Activated CD4-positive, alpha-beta T cell treated with anti-CD3 and anti-CD28 coated beads, Interleukin-2, amount 10 ng/mL, durations not matched to agents 24 days and 14 days (primary cell): ENCODE measurements at regions of chr13 and their contacts with region 1.

Region 1: DNA sequence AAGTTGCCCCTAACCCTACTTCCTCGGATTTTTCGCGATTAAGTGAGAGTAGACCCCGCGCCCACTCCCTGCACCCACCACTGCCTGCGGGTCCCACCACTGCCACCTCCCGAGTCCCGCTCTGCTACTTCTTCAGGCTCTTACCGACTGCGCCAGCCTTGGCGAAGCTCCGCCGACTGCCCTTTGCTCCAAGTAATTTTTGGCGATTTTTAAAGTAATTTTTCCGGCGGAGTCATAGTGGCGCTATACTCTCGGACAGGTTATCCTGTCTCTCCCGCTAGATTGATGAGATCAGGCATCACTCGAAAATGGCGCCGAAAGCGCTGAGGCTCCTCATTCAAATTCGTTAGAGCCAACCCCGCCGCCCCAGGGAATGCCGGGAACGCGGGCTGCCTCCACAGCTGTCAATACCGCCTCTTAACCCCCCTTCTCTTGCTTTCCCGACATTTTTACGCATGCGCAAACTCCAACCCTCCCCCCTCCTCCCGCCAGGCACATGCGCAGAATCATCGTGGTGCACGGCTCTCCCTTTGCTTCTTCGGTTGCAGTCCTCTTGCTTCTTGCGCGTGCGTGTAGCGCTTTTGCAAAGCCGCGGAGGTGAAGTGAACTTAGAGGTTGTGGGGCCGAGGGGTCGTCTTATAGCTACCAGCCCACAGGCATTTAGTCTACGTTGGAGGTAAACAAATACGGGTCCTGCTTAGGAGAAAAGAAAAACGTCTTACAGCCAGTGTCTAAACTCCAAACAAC is 66.6 kb downstream of the KCNRG start:
- DNase-seq: peak; percentile 99
- H3K4me3 Mint-ChIP-seq: peak overlapping the region; percentile 100
- H3K27ac Mint-ChIP-seq: peak overlapping the region; percentile 100
- H3K4me1 Mint-ChIP-seq: peaks cover 45% of the 10 kb centered on the region
- H3K27me3 Mint-ChIP-seq: peaks cover 5% of the 10 kb centered on the region

Region 2: DNA sequence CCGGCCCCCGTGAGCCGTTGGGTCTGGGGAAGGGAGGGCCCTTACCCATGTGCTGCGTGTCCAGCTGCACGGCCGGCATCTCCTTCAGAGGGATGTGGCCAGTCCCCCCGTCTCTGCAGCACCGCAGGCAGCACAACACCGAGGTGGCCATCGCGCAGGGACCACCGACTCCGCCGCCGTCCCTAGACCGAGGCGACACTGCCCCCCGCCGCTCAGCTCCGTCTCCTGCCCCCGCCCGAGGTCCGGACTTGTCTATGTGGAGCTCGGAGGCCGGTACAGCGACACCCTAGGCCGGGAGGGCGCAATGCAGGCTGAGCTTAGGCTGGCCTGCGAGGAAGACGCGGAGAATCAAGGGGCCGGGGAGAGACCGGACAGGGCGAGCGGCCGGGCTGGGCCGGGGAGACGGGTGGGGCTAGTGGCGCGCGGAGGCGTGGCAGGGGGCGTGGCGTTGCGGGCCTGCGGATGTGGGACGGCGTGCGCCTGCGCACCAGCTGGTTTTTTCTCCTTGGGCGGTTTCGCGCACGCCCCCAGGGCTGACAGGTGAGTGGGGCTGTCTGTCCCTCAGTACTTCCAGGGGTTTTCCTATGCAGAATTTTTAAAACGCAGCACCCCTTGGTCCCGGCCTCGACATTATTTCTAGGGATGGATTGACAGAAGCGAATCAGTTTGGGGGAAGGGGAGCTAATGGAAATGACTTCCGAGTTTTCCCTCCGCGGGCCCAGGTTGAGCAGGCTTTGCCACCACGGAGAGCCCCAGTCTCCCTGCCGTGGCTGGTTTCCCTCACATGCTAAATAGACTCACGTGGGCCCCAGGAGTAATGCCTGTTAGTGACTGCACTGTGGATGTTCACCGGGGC is 145.5 kb before region 1 on chr13 and contains the start of gene SPRYD7:
- intact Hi-C with region 1: loop called (anchors 5 kb)
- DNase-seq: peak; percentile 99
- H3K4me3 Mint-ChIP-seq: peak within 1 kb of the TSS; percentile 94
- H3K27ac Mint-ChIP-seq: peak within 1 kb of the TSS; percentile 83
- H3K4me1 Mint-ChIP-seq: peaks cover 13% of the 10 kb centered on the region
- H3K27me3 Mint-ChIP-seq: peaks cover 17% of the 10 kb centered on the region
- total RNA-seq, gene SPRYD7: 6.9 and 8.1 TPM in 2 replicates

Region 3: DNA sequence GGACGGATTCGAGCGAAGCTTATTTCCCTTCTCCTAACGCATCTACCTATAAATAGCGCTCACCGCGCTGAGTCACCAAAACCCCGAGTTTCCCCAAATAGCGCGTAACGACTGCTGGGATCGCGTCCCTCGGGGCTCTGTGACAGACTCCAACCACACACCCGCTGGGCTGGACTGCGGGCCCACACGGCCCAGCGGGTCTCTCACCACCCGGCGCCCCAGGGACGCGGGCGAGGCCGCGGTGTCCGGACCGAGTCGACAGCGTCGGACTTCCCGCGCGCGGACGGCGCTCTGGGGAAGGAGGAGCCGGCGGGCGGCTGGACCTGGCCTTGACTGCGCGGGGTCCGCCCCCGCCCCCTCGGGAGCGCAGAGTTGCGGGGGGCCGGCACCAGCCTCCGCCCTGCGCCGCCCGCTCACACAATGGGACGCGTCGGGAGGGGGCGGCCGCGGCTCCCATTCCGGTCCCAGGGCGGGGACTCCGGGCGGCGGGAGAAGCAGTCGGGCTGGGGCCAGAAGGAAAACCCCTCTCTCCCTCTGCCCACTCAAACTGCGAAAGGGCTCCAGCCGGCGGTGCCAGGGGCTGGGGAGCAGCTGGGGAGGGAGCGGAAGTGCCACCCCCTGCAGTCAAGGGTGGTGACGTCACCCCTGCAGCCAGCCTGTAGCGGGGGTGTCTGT is 42.1 kb after region 1 on chr13:
- intact Hi-C with region 1: loop called (anchors 1 kb)
- DNase-seq: peak; percentile 89
- H3K4me3 Mint-ChIP-seq: peak overlapping the region; percentile 84
- H3K27ac Mint-ChIP-seq: peak overlapping the region; percentile 93
- H3K4me1 Mint-ChIP-seq: peaks cover 41% of the 10 kb centered on the region
- H3K27me3 Mint-ChIP-seq: peaks cover 3% of the 10 kb centered on the region

Region 4: DNA sequence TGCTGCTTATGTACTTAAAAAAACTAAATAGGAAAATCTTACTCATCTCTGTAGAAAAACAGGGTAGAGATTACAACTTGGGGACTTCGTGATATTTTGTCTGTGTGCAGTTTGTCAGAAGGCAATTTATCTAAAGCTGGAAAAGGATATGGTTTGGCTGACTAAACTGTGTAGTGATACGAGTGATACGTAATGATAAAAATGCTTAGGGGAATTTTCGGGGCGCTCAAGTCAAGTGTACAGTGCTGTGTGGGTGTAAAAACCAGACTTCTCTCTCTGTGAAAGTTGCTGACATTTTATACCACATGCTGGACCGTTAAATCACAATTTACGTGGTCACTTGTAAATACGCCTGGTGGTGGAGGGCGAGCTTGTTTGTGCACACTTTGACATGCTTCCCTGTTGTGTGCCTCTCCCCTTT is 155.1 kb after region 1 on chr13:
- intact Hi-C with region 1: loop called (anchors 2 kb)
- DNase-seq: peak; percentile 83
- H3K4me3 Mint-ChIP-seq: peak overlapping the region; percentile 23
- H3K27ac Mint-ChIP-seq: peak overlapping the region; percentile 84
- H3K4me1 Mint-ChIP-seq: peaks cover 34% of the 10 kb centered on the region
- H3K27me3 Mint-ChIP-seq: peaks cover 29% of the 10 kb centered on the region

Region 5: DNA sequence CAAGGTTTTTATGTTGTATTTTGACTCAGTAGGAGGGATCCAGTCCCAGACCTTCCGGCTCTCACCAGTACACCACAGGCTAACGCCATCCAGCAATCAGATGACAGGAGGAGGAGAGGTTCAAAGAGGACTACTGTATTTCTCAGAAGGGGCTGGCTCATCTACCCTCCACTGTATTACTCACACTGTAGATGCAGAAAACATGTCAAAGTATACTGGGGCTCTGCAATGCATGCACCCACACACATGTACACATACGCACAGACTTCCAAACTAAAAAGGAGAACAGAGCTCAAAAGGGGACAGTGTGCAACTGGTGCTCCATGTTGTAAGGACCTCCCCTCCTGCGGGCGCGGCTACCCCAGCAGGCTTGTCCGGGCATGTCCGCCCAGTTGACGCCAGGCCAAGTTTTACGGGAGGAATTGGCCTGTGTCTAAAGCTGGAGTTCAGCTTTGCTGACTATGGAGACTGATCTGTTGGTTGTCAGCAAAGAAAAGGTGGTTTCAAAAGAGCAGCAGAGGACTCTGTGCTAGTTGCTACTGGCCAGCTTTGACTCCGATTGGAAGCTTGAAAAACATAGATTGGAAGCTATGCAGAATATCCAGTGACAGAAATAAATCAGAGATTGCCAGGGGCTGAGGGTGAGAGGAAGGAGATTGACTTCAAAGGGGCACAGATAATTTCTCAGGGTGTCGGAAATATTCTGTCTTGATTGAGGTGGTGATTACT is 447.5 kb after region 1 on chr13:
- intact Hi-C with region 1: loop called (anchors 2 kb)
- DNase-seq: peak; percentile 70
- H3K4me3 Mint-ChIP-seq: peak overlapping the region; percentile 8
- H3K27ac Mint-ChIP-seq: peak overlapping the region; percentile 66
- H3K4me1 Mint-ChIP-seq: peaks cover 34% of the 10 kb centered on the region
- H3K27me3 Mint-ChIP-seq: peaks cover 21% of the 10 kb centered on the region

Region 6: DNA sequence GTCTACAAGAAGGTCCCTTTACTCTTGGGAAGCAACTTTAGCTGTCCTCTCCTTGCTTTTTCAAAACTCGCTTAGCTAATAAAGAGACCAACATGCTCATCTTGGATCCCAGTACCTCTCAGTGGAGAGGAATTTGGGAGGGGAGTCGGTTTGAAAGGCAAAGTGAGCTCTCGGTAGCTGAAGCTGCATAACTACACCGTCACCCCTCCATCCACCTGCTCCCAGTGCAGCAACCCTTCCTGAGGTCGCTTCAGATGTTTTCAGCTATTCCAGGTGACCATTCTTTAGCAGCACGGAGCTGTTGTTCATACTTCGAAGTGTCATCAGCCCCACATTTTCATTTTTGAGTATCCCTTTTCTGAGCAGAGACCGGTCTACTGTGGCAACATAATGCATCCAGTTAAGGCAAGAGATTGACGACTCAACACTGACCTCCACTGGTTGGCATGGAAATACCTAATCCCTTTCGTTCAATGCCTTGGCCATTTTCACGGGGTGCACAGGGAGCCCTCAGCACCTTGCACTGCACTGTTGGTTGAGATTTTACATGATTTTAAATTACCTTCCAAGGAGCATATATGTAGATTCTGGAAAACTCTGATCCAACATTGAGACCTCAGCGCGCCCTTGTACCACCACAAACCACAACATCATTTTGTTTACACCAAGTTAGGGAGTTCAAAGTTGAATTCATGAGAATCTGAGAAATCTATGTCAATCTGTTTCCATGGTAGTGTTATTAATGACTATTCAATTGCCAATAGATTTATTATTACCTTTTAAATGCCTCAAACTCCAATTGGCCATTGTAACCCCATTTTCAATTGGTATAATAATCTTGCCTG is 719.5 kb after region 1 on chr13:
- intact Hi-C with region 1: loop called (anchors 2 kb)
- DNase-seq: peak; percentile 91
- H3K4me3 Mint-ChIP-seq: no peak overlapping the region
- H3K27ac Mint-ChIP-seq: no peak overlapping the region
- H3K4me1 Mint-ChIP-seq: peaks cover 18% of the 10 kb centered on the region
- H3K27me3 Mint-ChIP-seq: no peaks in the 10 kb centered on the region

Region 7: DNA sequence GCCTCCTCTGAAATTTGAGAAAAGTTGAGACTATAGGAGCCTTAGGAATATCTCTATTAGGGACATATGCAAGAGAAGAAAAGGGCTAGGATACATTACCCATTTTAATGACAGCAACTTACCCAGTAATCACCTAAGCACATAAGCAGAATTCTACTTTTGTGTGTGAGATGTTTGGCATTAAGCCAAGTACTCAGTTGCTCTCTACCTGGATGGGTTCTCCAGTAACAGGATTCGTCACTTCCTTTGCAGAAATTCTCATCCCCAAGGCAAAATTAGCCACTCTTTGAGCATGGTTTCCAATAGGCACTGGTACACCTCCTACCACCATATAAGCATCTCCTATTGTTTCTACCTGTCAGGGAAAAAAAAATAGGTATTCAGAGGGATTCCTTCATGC is 934.1 kb after region 1 on chr13:
- intact Hi-C with region 1: no loop called
- DNase-seq: no peak
- H3K4me3 Mint-ChIP-seq: no peak overlapping the region
- H3K27ac Mint-ChIP-seq: no peak overlapping the region
- H3K4me1 Mint-ChIP-seq: no peaks in the 10 kb centered on the region
- H3K27me3 Mint-ChIP-seq: peaks cover 9% of the 10 kb centered on the region

Region 8: GRCh38 chr13:51070005-51070649 is 988.3 kb after region 1 on chr13:
- intact Hi-C with region 1: loop called (anchors 2 kb)
- DNase-seq: peak; percentile 94
- H3K4me3 Mint-ChIP-seq: no peak overlapping the region
- H3K27ac Mint-ChIP-seq: no peak overlapping the region
- H3K4me1 Mint-ChIP-seq: peaks cover 18% of the 10 kb centered on the region
- H3K27me3 Mint-ChIP-seq: peaks cover 23% of the 10 kb centered on the region